ENCODE measurements at regions of chr11 and their contacts with region 1.

Region 1: GRCh38 chr11:118488480-118489109 is 38.7 kb upstream of the TTC36 start:
- DNase-seq: peak; percentile 37 to 95 (median 68)

Region 2: GRCh38 chr11:118401151-118401878 is 87.3 kb before region 1 on chr11 and contains the start of gene ATP5MG:
- intact Hi-C with region 1: loop called (anchors 10 kb)
- DNase-seq: peak; percentile 77 to 97 (median 88)

Measured in posterior cingulate gyrus (tissue), 11 donors.